ENCODE measurements at regions of chr15 and their contacts with region 1.

Region 1: DNA sequence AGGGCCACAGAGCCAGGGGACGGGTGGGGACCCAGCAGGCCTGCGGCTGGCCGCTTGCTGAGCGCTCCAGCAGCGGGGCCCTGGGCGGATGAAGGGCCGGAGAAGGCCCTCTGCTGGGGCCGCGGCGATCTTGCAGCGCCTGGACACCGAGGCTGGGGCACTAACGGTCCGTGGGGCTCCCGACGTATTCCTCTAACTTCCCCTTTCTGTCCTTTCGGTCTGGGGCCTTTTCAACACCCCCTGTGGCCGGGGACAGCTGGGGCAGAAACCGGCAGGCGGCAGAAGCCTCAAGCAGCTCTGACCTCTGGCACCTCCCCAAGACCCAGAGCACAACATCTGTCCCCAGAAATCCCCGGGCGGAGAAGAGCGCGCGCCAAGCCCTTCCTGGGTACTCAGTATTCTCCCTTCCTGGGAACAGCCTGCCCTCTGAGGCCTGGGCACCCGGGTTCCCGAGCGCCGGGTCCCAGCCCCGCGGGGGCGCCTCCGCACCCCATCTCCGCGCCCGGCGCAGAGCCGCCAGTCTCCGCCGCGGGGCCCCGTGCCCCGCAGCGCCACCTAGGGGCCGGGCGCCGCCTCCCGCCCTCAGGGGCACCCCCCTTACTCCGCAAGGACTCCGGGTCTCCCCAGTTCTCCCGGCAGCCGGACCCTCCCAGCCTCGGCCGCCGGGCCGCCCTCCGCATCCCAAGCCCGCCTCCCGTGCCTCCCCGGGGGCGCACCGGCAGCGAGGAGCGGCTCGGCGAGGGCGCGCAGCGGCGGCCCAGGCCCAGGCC is 582 bp upstream of the SLCO3A1 start:
- DNase-seq: peak; percentile 80
- H3K27ac ChIP-seq: peak overlapping the region; percentile 94
- CTCF ChIP-seq: peak; percentile 96

Region 2: DNA sequence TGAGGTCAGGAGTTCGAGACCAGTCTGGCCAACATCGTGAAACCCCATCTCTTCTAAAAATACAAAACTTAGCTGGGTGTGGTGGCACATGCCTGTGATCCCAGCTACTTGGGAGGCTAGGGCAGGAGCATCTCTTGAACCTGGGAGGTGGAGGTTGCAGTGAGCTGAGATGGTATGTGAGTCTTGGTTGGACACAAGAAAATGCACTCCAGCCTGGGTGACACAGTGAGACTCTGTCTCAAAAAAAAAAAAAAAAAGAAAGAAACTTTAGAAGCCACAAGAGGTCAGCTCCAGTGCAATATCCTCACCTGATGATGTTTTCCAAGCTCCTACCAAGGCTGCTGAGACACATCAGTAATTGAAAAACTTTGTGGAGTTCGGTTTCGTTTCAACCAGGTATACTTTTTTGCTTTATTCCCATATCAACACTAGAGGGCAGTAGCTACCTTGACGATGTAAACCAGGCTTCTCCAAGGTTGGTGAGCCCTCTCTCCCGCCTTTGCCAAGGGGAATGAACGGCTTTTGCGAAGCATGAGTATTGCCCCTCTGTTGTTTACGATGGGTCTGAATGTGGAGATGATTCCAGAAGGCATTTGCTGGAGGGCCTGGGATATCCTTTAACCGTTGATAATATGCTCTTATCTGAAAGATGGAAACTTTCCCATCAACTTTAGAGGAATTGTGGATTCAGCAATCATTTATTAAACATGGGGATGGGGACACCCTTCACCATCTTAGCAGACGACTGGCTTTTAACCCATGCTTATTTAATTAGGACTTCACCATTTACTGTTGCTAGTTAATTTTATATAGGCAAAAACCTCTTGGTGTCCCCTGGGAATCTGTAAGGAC is 550.1 kb before region 1 on chr15:
- CTCF ChIA-PET with region 1: interaction called, 11 read pairs
- POLR2A ChIA-PET with region 1: no interaction called
- DNase-seq: peak; percentile 78
- H3K27ac ChIP-seq: no peak overlapping the region
- CTCF ChIP-seq: peak; percentile 87

Region 3: DNA sequence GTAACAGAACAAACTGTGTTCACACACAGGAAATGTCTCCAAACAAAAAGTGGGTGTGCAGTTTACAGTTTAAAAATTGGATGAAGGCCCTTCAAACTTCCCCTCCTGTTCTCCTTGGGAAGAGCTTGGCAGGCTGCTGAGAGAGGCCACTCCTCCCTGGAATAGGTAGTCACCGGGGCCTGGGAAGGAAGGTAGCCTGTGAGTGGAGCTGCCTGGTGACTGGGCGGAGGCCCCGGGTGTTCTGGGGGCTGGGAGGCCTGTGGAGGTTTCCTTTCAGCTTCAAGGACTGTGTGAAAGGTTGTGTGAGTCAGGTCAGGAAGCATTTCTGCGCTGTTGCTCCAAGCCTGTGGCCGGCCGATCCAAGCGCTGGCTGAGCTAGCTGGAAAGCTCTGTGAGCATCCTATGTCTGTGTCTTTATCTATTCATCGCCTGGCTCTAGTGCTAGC is 14.7 kb after region 1 on chr15:
- CTCF ChIA-PET with region 1: interaction called, 21 read pairs
- POLR2A ChIA-PET with region 1: no interaction called
- DNase-seq: peak; percentile 98
- H3K27ac ChIP-seq: peak overlapping the region; percentile 99
- CTCF ChIP-seq: no peak

Region 4: DNA sequence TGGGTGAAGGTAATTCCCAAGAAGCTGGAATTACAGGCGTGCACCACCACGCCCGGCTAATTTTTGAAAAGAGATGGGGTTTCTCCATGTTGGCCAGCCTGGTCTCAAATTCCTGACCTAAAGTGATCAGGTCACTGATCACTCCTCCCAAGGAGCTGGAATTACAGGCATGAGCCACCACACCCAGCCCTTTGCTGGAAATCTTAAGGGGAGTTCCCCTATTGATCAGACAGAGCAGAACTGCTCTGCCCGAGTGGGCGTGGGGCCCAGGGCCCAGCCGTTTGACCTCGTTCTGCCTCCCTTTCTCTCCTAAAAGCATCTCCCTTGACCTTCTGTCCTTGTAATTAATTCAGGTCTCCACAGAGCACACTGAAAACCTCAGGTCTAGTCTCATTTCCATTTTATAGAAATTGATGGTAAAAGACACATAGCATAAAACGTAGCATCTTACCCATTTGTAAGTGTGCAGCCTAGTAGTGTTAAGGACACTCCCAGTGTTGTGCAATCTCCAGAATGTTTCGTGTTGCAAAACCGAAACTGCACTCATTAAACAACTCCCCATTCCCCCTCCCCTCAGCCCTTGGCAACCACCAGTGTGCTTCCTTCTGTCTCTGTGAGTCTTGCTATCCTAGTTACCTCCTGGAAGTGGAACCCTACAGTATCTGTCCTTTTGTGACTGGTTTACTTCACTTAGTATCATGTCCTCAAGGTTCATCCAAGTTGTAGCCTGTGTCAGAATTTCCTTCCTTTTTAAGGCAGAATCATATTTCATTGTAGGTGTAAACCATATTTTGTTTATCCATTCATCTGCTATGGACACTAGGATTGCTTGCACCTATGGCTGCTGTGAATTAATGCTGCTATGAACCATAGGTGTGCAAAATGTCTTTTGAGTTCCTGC is 90.0 kb after region 1 on chr15:
- CTCF ChIA-PET with region 1: interaction called, 21 read pairs
- POLR2A ChIA-PET with region 1: interaction called, 6 read pairs
- DNase-seq: peak; percentile 81
- H3K27ac ChIP-seq: peak overlapping the region; percentile 97
- CTCF ChIP-seq: no peak

Region 5: GRCh38 chr15:92077353-92078085 is 224.6 kb after region 1 on chr15:
- CTCF ChIA-PET with region 1: interaction called, 31 read pairs
- POLR2A ChIA-PET with region 1: no interaction called
- DNase-seq: peak; percentile 73
- H3K27ac ChIP-seq: no peak overlapping the region
- CTCF ChIP-seq: peak; percentile 87

Measured in RWPE1 (cell line).